Calu3 (cell line): ENCODE measurements at regions of chr9 and their contacts with region 1.

Region 1: GRCh38 chr9:30411571-30411970 is 1972.9 kb upstream of the ACO1 start:
- DNase-seq: no peak
- H3K4me3 Mint-ChIP-seq: no peak overlapping the region
- H3K27ac Mint-ChIP-seq: no peak overlapping the region
- H3K4me1 Mint-ChIP-seq: no peaks in the 10 kb centered on the region
- H3K27me3 Mint-ChIP-seq: no peaks in the 10 kb centered on the region
- CTCF ChIP-seq: no peak

Region 2: GRCh38 chr9:30075451-30076199 is 335.9 kb before region 1 on chr9:
- CTCF ChIA-PET with region 1: no interaction called
- intact Hi-C with region 1: loop called (anchors 5 kb)
- DNase-seq: peak; percentile 6
- H3K4me3 Mint-ChIP-seq: no peak overlapping the region
- H3K27ac Mint-ChIP-seq: peak overlapping the region; percentile 50
- H3K4me1 Mint-ChIP-seq: no peaks in the 10 kb centered on the region
- H3K27me3 Mint-ChIP-seq: no peaks in the 10 kb centered on the region
- CTCF ChIP-seq: no peak

Region 3: GRCh38 chr9:30244877-30245276 is 166.7 kb before region 1 on chr9:
- CTCF ChIA-PET with region 1: no interaction called
- intact Hi-C with region 1: no loop called
- DNase-seq: no peak
- H3K4me3 Mint-ChIP-seq: no peak overlapping the region
- H3K27ac Mint-ChIP-seq: no peak overlapping the region
- H3K4me1 Mint-ChIP-seq: no peaks in the 10 kb centered on the region
- H3K27me3 Mint-ChIP-seq: no peaks in the 10 kb centered on the region
- CTCF ChIP-seq: no peak